Psoas muscle (tissue), 8 donors: ENCODE measurements at regions of chr14 and their contacts with region 1.

Region 1: DNA sequence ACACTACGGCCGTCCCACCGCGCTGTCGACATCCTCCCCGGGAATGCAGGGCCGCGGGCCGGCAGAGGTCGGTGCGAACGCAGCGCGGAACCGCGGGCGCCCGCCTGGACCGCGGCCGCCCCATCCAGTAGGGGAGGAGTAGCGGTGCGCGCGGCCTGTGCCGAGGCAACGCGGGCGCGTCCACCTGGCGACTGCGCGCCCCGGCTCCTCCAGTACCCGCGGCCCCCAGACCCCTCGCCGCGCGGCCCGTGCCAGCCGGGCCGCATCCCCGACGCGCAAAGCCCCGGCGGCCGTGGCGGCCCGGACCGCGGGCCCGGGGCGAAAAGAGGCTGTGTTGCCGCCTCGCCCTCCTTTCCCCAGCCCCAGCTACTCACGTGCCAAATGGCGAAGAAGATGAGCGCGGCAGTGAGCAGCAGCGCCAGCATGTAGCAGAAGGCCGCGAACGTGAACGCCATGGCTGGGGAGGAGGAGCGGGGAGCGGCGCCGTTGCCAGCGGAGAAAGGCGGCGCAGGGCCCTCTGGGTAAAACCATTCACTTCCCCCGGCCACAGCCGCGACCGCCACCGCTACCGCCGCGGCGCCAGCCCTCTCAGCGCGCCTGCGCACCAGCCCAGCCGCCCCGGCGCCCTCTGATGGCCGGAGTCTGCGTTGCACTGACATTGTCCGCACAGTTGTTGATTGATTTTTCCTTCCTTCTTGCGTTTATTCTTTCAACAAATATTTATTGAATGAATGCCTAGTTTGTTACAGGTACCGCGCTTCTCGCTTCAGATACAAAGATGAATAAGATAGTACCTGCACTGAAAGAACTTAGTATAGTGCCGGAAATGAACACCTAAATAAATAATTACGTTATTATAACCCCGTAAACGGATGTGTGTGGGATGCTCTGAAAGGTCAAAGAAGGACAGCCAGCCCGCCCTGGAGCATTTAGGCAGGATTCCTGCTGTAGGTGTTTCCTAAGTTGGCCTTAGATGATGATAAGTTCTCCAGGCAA is at the start of gene CNIH1:
- DNase-seq: peak; percentile 92 to 96
- ATAC-seq: peak; percentile 98 to 100 (median 99)
- H3K4me3 ChIP-seq: peak within 1 kb of the TSS; percentile 85
- H3K27ac ChIP-seq: peak within 1 kb of the TSS; percentile 91
- H3K4me1 ChIP-seq: peaks cover 10% of the 10 kb centered on the region
- H3K27me3 ChIP-seq: no peaks in the 10 kb centered on the region
- CTCF ChIP-seq: peak; percentile 92
- total RNA-seq, gene CNIH1: 57.8 to 79.0 (median 63.0) TPM

Region 2: GRCh38 chr14:54396493-54397335 is 44.5 kb before region 1 on chr14 and contains the start of gene CDKN3:
- intact Hi-C with region 1: loop called (anchors 5 kb)
- DNase-seq: peak; percentile 98
- ATAC-seq: peak; percentile 99
- H3K4me3 ChIP-seq: peak within 1 kb of the TSS; percentile 77
- H3K27ac ChIP-seq: no peak within 1 kb of the TSS
- H3K4me1 ChIP-seq: no peaks in the 10 kb centered on the region
- H3K27me3 ChIP-seq: no peaks in the 10 kb centered on the region
- CTCF ChIP-seq: peak; percentile 48
- total RNA-seq, gene CDKN3: 1.4 to 5.2 (median 3.2) TPM

Region 3: DNA sequence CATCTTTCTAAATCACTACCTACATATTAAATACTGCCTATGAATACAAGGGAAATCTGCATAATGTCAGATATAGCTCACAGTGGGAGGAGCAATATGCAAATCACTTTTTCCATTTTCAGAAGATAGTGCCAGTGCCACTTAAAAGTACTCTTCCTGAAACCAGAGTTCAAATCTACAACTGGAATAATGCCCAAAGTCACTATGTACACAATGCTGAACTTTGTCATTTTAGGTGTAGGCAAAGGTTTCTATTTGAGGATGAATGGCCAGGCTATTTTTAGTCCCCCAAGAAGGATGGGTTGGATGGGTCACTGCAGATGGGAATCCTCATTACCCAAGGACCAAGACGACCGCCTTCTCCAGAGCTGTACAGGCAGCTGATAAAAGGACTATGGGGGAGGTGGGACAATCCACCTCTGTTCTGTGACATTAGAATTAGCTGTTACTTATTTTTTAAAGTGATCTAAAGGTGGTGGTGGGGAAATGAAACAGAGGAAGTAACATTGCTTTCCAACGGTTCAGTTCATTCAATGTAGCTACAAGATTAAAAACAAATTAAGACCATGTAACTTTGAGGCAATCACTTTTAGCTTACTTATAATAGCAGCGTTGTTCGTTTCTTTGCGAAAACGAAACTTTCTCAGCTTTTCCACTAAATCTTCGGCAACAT is 42.0 kb after region 1 on chr14:
- intact Hi-C with region 1: loop called in 1 of 2 experiments (anchors 5 kb)
- DNase-seq: no peak
- ATAC-seq: peak in 1 of 4 donors; percentile 41
- H3K4me3 ChIP-seq: no peak overlapping the region
- H3K27ac ChIP-seq: no peak overlapping the region
- H3K4me1 ChIP-seq: peaks cover 22% of the 10 kb centered on the region
- H3K27me3 ChIP-seq: no peaks in the 10 kb centered on the region
- CTCF ChIP-seq: no peak